CD8-positive, alpha-beta memory T cell (primary cell): ENCODE measurements at regions of chr3 and their contacts with region 1.

Region 1: GRCh38 chr3:66378256-66378823 is 122.5 kb downstream of the LRIG1 start:
- DNase-seq: peak in 4 of 5 donors; percentile 10 to 44 (median 30)
- H3K4me3 ChIP-seq: no peak overlapping the region
- H3K4me3 Mint-ChIP-seq: peak overlapping the region in 1 of 7 donors; percentile 42
- H3K27ac ChIP-seq: no peak overlapping the region
- H3K27ac Mint-ChIP-seq: peak overlapping the region; percentile 63 to 99 (median 83)
- H3K4me1 ChIP-seq: peaks cover 15% of the 10 kb centered on the region
- H3K4me1 Mint-ChIP-seq: peaks cover 11 to 21% (median 21%) of the 10 kb centered on the region in 3 donors
- H3K27me3 ChIP-seq: no peaks in the 10 kb centered on the region
- H3K27me3 Mint-ChIP-seq: no peaks in the 10 kb centered on the region

Region 2: DNA sequence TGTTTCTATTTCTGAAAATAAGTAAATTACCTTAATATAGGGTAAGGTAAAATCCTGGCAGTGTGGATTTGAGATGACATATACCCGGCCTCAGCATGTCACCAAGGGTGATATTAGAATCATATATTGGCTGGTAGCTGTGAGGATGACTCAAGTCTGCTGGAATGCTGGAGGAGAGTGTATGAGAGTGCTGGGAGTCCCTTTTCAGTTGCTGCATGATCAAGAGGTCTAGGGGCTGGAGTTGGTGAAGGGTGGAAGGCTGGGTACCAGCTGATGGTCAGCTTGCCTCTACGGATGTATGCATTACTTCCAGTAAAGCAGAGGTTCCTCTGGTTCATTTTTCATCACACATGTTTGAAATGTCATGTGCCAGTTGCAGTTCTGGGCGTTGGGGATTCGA is 117.0 kb before region 1 on chr3:
- CTCF ChIA-PET with region 1: interaction called, 10 read pairs
- POLR2A ChIA-PET with region 1: no interaction called
- DNase-seq: no peak
- H3K4me3 ChIP-seq: no peak overlapping the region
- H3K4me3 Mint-ChIP-seq: no peak overlapping the region
- H3K27ac ChIP-seq: no peak overlapping the region
- H3K27ac Mint-ChIP-seq: peak overlapping the region in 4 of 8 donors; percentile 14 to 32 (median 21)
- H3K4me1 ChIP-seq: no peaks in the 10 kb centered on the region
- H3K4me1 Mint-ChIP-seq: peaks cover 6 to 8% (median 7%) of the 10 kb centered on the region in 3 donors
- H3K27me3 ChIP-seq: no peaks in the 10 kb centered on the region
- H3K27me3 Mint-ChIP-seq: no peaks in the 10 kb centered on the region

Region 3: GRCh38 chr3:66302288-66302687 is 76.1 kb before region 1 on chr3:
- CTCF ChIA-PET with region 1: interaction called, 17 read pairs
- POLR2A ChIA-PET with region 1: interaction called, 6 read pairs
- DNase-seq: peak; percentile 23 to 83 (median 58)
- H3K4me3 ChIP-seq: no peak overlapping the region
- H3K4me3 Mint-ChIP-seq: peak overlapping the region; percentile 41 to 70 (median 58)
- H3K27ac ChIP-seq: peak overlapping the region; percentile 94
- H3K27ac Mint-ChIP-seq: peak overlapping the region in 2 of 8 donors; percentile 97 to 99
- H3K4me1 ChIP-seq: peaks cover 85% of the 10 kb centered on the region
- H3K4me1 Mint-ChIP-seq: peaks cover 23 to 26% (median 25%) of the 10 kb centered on the region in 3 donors
- H3K27me3 ChIP-seq: no peaks in the 10 kb centered on the region
- H3K27me3 Mint-ChIP-seq: no peaks in the 10 kb centered on the region

Region 4: GRCh38 chr3:66394019-66394752 is 15.8 kb after region 1 on chr3:
- CTCF ChIA-PET with region 1: interaction called, 17 read pairs
- POLR2A ChIA-PET with region 1: no interaction called
- DNase-seq: peak; percentile 42 to 81 (median 54)
- H3K4me3 ChIP-seq: peak overlapping the region; percentile 41
- H3K4me3 Mint-ChIP-seq: peak overlapping the region; percentile 77 to 91 (median 90)
- H3K27ac ChIP-seq: peak overlapping the region; percentile 34
- H3K27ac Mint-ChIP-seq: peak overlapping the region; percentile 88 to 99 (median 96)
- H3K4me1 ChIP-seq: peaks cover 47% of the 10 kb centered on the region
- H3K4me1 Mint-ChIP-seq: peaks cover 53 to 62% (median 61%) of the 10 kb centered on the region in 3 donors
- H3K27me3 ChIP-seq: no peaks in the 10 kb centered on the region
- H3K27me3 Mint-ChIP-seq: no peaks in the 10 kb centered on the region

Region 5: GRCh38 chr3:66500576-66501482 is 122.5 kb after region 1 on chr3 and contains the start of gene LRIG1:
- CTCF ChIA-PET with region 1: no interaction called
- POLR2A ChIA-PET with region 1: no interaction called
- DNase-seq: peak; percentile 90 to 98 (median 97)
- H3K4me3 ChIP-seq: peak within 1 kb of the TSS; percentile 68
- H3K4me3 Mint-ChIP-seq: peak within 1 kb of the TSS; percentile 90 to 98 (median 95)
- H3K27ac ChIP-seq: peak within 1 kb of the TSS; percentile 55
- H3K27ac Mint-ChIP-seq: peak within 1 kb of the TSS; percentile 55 to 93 (median 86)
- H3K4me1 ChIP-seq: peaks cover 46% of the 10 kb centered on the region
- H3K4me1 Mint-ChIP-seq: peaks cover 62 to 70% (median 65%) of the 10 kb centered on the region in 3 donors
- H3K27me3 ChIP-seq: no peaks in the 10 kb centered on the region
- H3K27me3 Mint-ChIP-seq: no peaks in the 10 kb centered on the region
- total RNA-seq, gene LRIG1: 37.9 to 38.2 TPM